HEK293 (cell line): ENCODE measurements at regions of chr6 and their contacts with region 1.

Region 1: GRCh38 chr6:70310063-70310694 is 7.3 kb upstream of the COL9A1 start:
- H3K4me3 ChIP-seq: no peak overlapping the region
- H3K27ac ChIP-seq: no peak overlapping the region
- H3K4me1 ChIP-seq: peaks cover 6% of the 10 kb centered on the region; the same call in 1 of the 2 replicates
- CTCF ChIP-seq: no peak

Region 2: GRCh38 chr6:70221025-70221714 is 89.0 kb before region 1 on chr6:
- CTCF ChIA-PET with region 1: interaction called, 78 read pairs
- POLR2A ChIA-PET with region 1: no interaction called
- H3K4me3 ChIP-seq: no peak overlapping the region
- H3K27ac ChIP-seq: no peak overlapping the region
- H3K4me1 ChIP-seq: no peaks in the 10 kb centered on the region
- CTCF ChIP-seq: 0 out of 2 replicates have a peak, but pooled peaks have one; percentile 27

Region 3: GRCh38 chr6:70264306-70264705 is 45.9 kb before region 1 on chr6:
- CTCF ChIA-PET with region 1: no interaction called
- POLR2A ChIA-PET with region 1: no interaction called
- H3K4me3 ChIP-seq: no peak overlapping the region
- H3K27ac ChIP-seq: no peak overlapping the region
- H3K4me1 ChIP-seq: no peaks in the 10 kb centered on the region
- CTCF ChIP-seq: no peak

Region 4: GRCh38 chr6:70289299-70289698 is 20.9 kb before region 1 on chr6:
- CTCF ChIA-PET with region 1: interaction called, 10 read pairs
- POLR2A ChIA-PET with region 1: no interaction called
- H3K4me3 ChIP-seq: no peak overlapping the region
- H3K27ac ChIP-seq: no peak overlapping the region
- H3K4me1 ChIP-seq: no peaks in the 10 kb centered on the region
- CTCF ChIP-seq: 0 out of 2 replicates have a peak, but pooled peaks have one; percentile 20

Region 5: GRCh38 chr6:70345619-70346018 is 35.4 kb after region 1 on chr6:
- CTCF ChIA-PET with region 1: interaction called, 11 read pairs
- POLR2A ChIA-PET with region 1: no interaction called
- H3K4me3 ChIP-seq: no peak overlapping the region
- H3K27ac ChIP-seq: no peak overlapping the region
- H3K4me1 ChIP-seq: no peaks in the 10 kb centered on the region
- CTCF ChIP-seq: no peak

Region 6: DNA sequence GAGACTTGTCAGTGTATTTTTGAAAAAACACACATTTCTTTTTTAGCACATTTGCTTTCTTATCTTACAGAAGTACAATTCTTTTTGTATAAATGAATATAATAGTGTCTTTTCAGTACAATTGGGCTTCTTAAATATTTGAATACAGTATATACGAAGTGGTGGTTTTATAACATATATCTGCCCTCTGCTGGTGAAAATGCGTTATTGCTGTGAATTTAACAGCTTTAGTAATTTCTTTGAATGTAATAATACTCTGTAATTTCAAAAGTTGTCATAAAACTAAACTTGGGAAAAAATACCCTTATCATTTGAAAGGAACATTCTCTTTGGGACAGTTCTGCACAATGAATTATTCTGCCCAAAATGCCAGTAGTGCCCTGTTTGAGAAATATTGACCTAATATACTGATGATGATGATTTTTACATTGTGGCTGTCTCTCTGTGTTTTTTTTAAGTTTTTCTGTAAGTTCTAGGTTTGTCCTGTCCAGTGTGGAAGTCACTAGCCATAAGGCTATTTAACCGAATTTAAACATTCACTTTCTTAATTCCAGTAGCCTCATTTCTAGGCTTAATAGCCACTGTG is 376.5 kb after region 1 on chr6:
- CTCF ChIA-PET with region 1: interaction called, 48 read pairs
- POLR2A ChIA-PET with region 1: no interaction called
- H3K4me3 ChIP-seq: no peak overlapping the region
- H3K27ac ChIP-seq: no peak overlapping the region
- H3K4me1 ChIP-seq: peaks cover 24% of the 10 kb centered on the region
- CTCF ChIP-seq: peak; percentile 23; the same call in 1 of the 2 replicates

Region 7: GRCh38 chr6:70955441-70956190 is 645.4 kb after region 1 on chr6:
- CTCF ChIA-PET with region 1: interaction called, 21 read pairs
- POLR2A ChIA-PET with region 1: no interaction called
- H3K4me3 ChIP-seq: peak overlapping the region; percentile 57
- H3K27ac ChIP-seq: no peak overlapping the region; the same call in 1 of the 2 replicates
- H3K4me1 ChIP-seq: no peaks in the 10 kb centered on the region
- CTCF ChIP-seq: peak; percentile 96